Caco-2 (cell line): ENCODE measurements at regions of chr14 and their contacts with region 1.

Region 1: GRCh38 chr14:56659964-56660551 is 80.5 kb downstream of the TMEM260 start:
- DNase-seq: peak in 1 of 2 experiments; percentile 56
- H3K4me3 ChIP-seq: no peak overlapping the region
- H3K4me3 Mint-ChIP-seq: peak overlapping the region; percentile 48
- H3K27ac Mint-ChIP-seq: peak overlapping the region; percentile 14
- H3K4me1 ChIP-seq: peaks cover 35% of the 10 kb centered on the region
- H3K4me1 Mint-ChIP-seq: peaks cover 37% of the 10 kb centered on the region
- H3K27me3 ChIP-seq: no peaks in the 10 kb centered on the region
- H3K27me3 Mint-ChIP-seq: no peaks in the 10 kb centered on the region
- CTCF ChIP-seq: peak; percentile 70 to 78

Region 2: DNA sequence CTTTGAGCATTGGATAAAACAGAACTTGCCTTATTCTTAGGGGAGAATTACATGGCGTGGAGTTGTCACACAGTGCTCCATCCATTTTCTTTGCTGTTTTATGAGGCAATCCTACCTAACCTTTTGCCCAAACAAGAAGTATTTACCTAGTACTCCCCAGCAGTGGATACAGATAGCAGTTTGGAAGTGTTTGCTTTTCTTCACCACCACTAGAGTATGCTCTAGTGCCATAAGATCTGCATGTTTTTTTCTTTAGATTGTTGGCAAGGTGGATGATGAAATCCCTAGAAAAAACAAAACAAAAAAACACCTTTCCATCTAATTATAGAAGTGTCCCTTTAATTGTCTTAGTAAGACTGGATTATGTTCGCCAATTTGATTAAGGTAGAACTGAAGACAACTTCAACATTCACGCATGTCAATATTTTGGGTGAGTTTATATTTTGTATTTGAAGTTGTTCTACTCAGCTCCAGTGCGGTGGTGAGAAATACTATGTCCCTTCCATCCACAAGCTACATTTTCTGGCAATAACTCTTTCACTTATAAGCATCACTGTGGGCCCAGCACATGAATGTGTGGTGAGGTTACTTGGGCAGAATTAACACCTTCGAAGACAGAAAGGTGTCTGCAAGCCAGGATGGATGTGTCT is 104.0 kb before region 1 on chr14:
- CTCF ChIA-PET with region 1: no interaction called
- POLR2A ChIA-PET with region 1: no interaction called
- intact Hi-C with region 1: loop called (anchors 5 kb)
- DNase-seq: peak in 1 of 2 experiments; percentile 52
- H3K4me3 ChIP-seq: no peak overlapping the region
- H3K4me3 Mint-ChIP-seq: no peak overlapping the region
- H3K27ac Mint-ChIP-seq: no peak overlapping the region
- H3K4me1 ChIP-seq: 0 out of 2 replicates have a peak, but pooled peaks cover 4% of the 10 kb centered on the region
- H3K4me1 Mint-ChIP-seq: no peaks in the 10 kb centered on the region
- H3K27me3 ChIP-seq: no peaks in the 10 kb centered on the region
- H3K27me3 Mint-ChIP-seq: peaks cover 2% of the 10 kb centered on the region
- CTCF ChIP-seq: peak; percentile 63 to 83

Region 3: GRCh38 chr14:56821807-56822615 is 162.0 kb after region 1 on chr14:
- CTCF ChIA-PET with region 1: no interaction called
- POLR2A ChIA-PET with region 1: no interaction called
- intact Hi-C with region 1: loop called (anchors 1 kb)
- DNase-seq: peak; percentile 80 to 85
- H3K4me3 ChIP-seq: no peak overlapping the region
- H3K4me3 Mint-ChIP-seq: peak overlapping the region; percentile 5
- H3K27ac Mint-ChIP-seq: no peak overlapping the region
- H3K4me1 ChIP-seq: peaks cover 10% of the 10 kb centered on the region
- H3K4me1 Mint-ChIP-seq: peaks cover 14% of the 10 kb centered on the region
- H3K27me3 ChIP-seq: no peaks in the 10 kb centered on the region
- H3K27me3 Mint-ChIP-seq: no peaks in the 10 kb centered on the region
- CTCF ChIP-seq: no peak

Region 4: DNA sequence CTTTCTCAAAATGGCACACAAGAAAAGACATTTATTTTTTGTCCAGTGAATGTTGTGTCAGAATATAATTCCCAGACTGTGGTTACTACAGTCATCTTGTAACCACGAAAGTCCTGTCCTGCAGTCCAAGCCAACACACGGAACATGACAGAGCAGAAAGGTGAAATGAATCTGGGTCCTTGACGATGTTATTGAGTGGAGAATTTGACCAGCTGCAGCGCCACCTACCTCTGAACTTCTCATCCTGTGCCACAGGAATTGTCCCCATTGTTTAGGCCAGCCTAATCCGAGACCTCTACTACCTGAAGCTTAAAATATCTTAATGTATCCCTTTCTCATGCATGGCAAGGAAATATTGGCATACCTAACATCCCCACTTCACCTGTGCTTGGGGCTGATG is 214.3 kb after region 1 on chr14:
- CTCF ChIA-PET with region 1: no interaction called
- POLR2A ChIA-PET with region 1: no interaction called
- intact Hi-C with region 1: loop called (anchors 1 kb)
- DNase-seq: peak; percentile 49 to 52
- H3K4me3 ChIP-seq: no peak overlapping the region
- H3K4me3 Mint-ChIP-seq: no peak overlapping the region
- H3K27ac Mint-ChIP-seq: no peak overlapping the region
- H3K4me1 ChIP-seq: no peaks in the 10 kb centered on the region
- H3K4me1 Mint-ChIP-seq: no peaks in the 10 kb centered on the region
- H3K27me3 ChIP-seq: no peaks in the 10 kb centered on the region
- H3K27me3 Mint-ChIP-seq: peaks cover 4% of the 10 kb centered on the region
- CTCF ChIP-seq: peak; percentile 55 to 57

Region 5: DNA sequence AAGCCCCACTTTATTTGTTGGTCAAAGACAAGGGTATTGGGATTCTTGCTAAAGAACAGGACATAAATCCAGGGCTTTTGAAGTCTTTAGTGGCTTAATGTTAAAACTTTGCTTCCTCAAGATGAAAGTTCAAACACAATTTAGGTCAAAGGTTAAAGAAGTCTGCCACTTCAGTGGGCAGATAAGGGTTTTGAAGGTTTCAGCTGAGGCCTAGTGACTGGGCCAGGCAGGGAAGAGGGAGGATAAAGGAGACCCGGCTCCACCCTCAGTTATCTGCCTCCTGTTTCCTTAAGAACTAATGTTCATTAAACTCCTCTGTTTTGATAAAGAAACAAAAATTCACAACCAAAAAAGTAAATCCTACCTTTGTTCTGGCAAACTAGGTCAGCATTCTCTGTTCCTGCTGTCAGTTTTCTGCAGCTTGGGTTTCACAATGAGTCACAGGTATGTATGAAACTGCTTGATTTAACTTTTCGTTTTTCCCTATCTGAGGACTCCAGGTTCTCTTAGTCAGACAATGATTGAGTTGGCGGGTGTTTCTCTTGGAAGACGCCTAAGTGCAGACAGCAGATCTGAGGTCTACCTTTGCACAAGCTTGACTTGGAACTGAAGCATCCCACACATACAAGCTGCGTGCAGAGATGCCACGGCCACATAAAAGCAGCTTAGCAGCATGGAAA is 400.4 kb after region 1 on chr14:
- CTCF ChIA-PET with region 1: no interaction called
- POLR2A ChIA-PET with region 1: no interaction called
- intact Hi-C with region 1: loop called (anchors 1 kb)
- DNase-seq: peak; percentile 49 to 66
- H3K4me3 ChIP-seq: no peak overlapping the region
- H3K4me3 Mint-ChIP-seq: no peak overlapping the region
- H3K27ac Mint-ChIP-seq: no peak overlapping the region
- H3K4me1 ChIP-seq: peaks cover 32% of the 10 kb centered on the region
- H3K4me1 Mint-ChIP-seq: peaks cover 19% of the 10 kb centered on the region
- H3K27me3 ChIP-seq: no peaks in the 10 kb centered on the region
- H3K27me3 Mint-ChIP-seq: no peaks in the 10 kb centered on the region
- CTCF ChIP-seq: no peak

Region 6: GRCh38 chr14:57066887-57067513 is 406.9 kb after region 1 on chr14:
- CTCF ChIA-PET with region 1: no interaction called
- POLR2A ChIA-PET with region 1: no interaction called
- intact Hi-C with region 1: loop called (anchors 1 kb)
- DNase-seq: peak; percentile 54 to 72
- H3K4me3 ChIP-seq: no peak overlapping the region
- H3K4me3 Mint-ChIP-seq: no peak overlapping the region
- H3K27ac Mint-ChIP-seq: no peak overlapping the region
- H3K4me1 ChIP-seq: no peaks in the 10 kb centered on the region
- H3K4me1 Mint-ChIP-seq: peaks cover 7% of the 10 kb centered on the region
- H3K27me3 ChIP-seq: no peaks in the 10 kb centered on the region
- H3K27me3 Mint-ChIP-seq: no peaks in the 10 kb centered on the region
- CTCF ChIP-seq: peak; percentile 69 to 84

Region 7: DNA sequence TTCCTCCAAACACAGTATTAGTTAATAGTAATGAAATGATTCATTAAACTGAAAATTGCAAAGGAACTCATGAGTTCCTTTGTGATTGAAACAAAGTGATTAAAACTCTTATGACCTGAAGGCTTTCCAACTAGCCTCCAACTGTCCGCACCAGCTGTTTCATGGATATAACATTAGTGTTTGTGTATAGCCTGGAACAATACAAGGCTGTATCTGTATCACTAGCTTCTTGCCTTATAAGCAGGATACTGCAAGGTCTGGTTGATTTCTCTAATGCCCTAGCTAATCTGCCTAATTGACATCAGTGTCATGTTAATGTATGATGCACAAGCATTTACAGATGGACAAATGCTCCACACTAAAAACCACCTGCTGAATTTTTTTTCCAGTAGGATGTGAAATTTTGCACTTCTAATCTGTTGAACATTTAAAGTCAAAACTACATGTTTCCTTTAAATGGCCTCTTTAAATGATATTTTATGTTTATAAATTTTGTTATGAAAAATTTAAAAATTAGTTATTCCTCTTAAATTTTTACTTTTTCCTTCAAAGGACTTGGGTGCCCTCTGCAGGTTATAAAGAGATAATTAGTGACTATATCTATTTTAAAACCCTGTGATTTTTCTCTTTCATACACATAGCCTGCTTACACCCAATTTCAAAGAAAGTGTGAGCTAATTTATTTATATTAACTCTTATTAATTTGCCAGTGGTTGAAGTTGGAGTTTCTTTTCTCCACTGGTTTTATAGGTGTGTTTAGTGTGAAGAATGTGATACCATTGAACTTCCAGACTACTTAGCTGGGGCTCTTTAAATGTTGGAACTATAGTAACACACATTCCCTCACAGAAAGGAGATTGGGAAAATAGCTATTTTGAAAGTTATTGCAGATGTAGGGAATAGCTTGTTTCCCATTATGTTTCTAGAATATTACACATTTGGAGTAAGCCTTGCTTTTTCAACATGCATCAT is 634.1 kb after region 1 on chr14:
- CTCF ChIA-PET with region 1: no interaction called
- POLR2A ChIA-PET with region 1: no interaction called
- intact Hi-C with region 1: loop called (anchors 10 kb)
- DNase-seq: no peak
- H3K4me3 ChIP-seq: no peak overlapping the region
- H3K4me3 Mint-ChIP-seq: no peak overlapping the region
- H3K27ac Mint-ChIP-seq: no peak overlapping the region
- H3K4me1 ChIP-seq: peaks cover 29% of the 10 kb centered on the region
- H3K4me1 Mint-ChIP-seq: no peaks in the 10 kb centered on the region
- H3K27me3 ChIP-seq: no peaks in the 10 kb centered on the region
- H3K27me3 Mint-ChIP-seq: no peaks in the 10 kb centered on the region
- CTCF ChIP-seq: peak in 1 of 2 experiments; percentile 25